ENCODE measurements at regions of chr6 and their contacts with region 1.

Region 1: GRCh38 chr6:26054857-26055669 is 32.2 kb upstream of the HFE start:
- DNase-seq: peak; percentile 96
- ATAC-seq: peak; percentile 65
- H3K4me3 Mint-ChIP-seq: peak overlapping the region; percentile 85
- H3K27ac Mint-ChIP-seq: peak overlapping the region; percentile 99
- H3K4me1 Mint-ChIP-seq: peaks cover 31% of the 10 kb centered on the region
- H3K27me3 Mint-ChIP-seq: peaks cover 3% of the 10 kb centered on the region

Region 2: GRCh38 chr6:25511376-25511775 is 543.7 kb before region 1 on chr6:
- CTCF ChIA-PET with region 1: no interaction called
- DNase-seq: no peak
- ATAC-seq: no peak
- H3K4me3 Mint-ChIP-seq: no peak overlapping the region
- H3K27ac Mint-ChIP-seq: no peak overlapping the region
- H3K4me1 Mint-ChIP-seq: no peaks in the 10 kb centered on the region
- H3K27me3 Mint-ChIP-seq: no peaks in the 10 kb centered on the region

Region 3: DNA sequence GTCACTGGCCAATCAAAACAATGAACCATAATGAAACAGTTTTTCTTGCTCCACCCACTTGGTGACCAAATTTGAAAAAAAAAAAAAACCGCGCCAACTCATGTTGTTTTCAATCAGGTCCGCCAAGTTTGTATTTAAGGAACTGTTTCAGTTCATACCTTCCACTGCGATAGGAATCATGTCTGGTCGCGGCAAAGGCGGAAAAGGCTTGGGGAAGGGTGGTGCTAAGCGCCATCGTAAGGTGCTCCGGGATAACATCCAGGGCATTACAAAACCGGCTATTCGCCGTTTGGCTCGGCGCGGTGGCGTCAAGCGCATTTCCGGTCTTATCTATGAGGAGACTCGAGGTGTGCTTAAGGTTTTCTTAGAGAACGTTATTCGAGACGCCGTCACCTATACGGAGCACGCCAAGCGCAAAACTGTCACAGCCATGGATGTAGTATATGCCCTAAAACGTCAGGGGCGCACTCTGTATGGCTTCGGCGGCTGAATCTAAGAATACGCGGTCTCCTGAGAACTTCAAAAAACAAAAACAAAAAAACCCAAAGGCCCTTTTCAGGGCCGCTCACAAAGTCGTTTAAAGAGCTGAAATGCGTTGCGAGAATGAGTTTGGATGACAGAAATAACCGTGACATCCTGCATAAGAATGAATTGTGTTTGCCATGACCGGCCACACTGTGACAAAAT is 48.9 kb after region 1 on chr6:
- CTCF ChIA-PET with region 1: interaction called, 566 read pairs
- DNase-seq: peak; percentile 96
- ATAC-seq: peak; percentile 86
- H3K4me3 Mint-ChIP-seq: peak overlapping the region; percentile 72
- H3K27ac Mint-ChIP-seq: peak overlapping the region; percentile 99
- H3K4me1 Mint-ChIP-seq: peaks cover 17% of the 10 kb centered on the region
- H3K27me3 Mint-ChIP-seq: peaks cover 3% of the 10 kb centered on the region